ENCODE measurements at regions of chr12 and their contacts with region 1.

Region 1: GRCh38 chr12:63495974-63496373 is 172.3 kb downstream of the DPY19L2 start:
- DNase-seq: no peak
- ATAC-seq: no peak

Region 2: GRCh38 chr12:63480186-63480585 is 15.8 kb before region 1 on chr12:
- intact Hi-C with region 1: loop called (anchors 1 kb)
- DNase-seq: no peak
- ATAC-seq: no peak